Activated CD4-positive, alpha-beta T cell treated with anti-CD3 and anti-CD28 coated beads for 36 hours (primary cell): ENCODE measurements at regions of chr20 and their contacts with region 1.

Region 1: GRCh38 chr20:46363800-46364634 is 42.4 kb downstream of the ELMO2 start:
- DNase-seq: peak; percentile 92
- ATAC-seq: peak; percentile 85
- H3K4me3 Mint-ChIP-seq: peak overlapping the region; percentile 84
- H3K27ac Mint-ChIP-seq: peak overlapping the region; percentile 86
- H3K4me1 Mint-ChIP-seq: peaks cover 82% of the 10 kb centered on the region
- H3K27me3 Mint-ChIP-seq: no peaks in the 10 kb centered on the region

Region 2: GRCh38 chr20:44909872-44910689 is 1453.9 kb before region 1 on chr20 and contains the start of gene PABPC1L:
- CTCF ChIA-PET with region 1: no interaction called
- POLR2A ChIA-PET with region 1: no interaction called
- intact Hi-C with region 1: loop called in 1 of 2 experiments (anchors 5 kb)
- DNase-seq: peak; percentile 86
- ATAC-seq: peak; percentile 90
- H3K4me3 Mint-ChIP-seq: peak within 1 kb of the TSS; percentile 78
- H3K27ac Mint-ChIP-seq: peak within 1 kb of the TSS; percentile 64
- H3K4me1 Mint-ChIP-seq: peaks cover 34% of the 10 kb centered on the region
- H3K27me3 Mint-ChIP-seq: no peaks in the 10 kb centered on the region
- total RNA-seq, gene PABPC1L: 61.7 to 71.3 TPM

Region 3: DNA sequence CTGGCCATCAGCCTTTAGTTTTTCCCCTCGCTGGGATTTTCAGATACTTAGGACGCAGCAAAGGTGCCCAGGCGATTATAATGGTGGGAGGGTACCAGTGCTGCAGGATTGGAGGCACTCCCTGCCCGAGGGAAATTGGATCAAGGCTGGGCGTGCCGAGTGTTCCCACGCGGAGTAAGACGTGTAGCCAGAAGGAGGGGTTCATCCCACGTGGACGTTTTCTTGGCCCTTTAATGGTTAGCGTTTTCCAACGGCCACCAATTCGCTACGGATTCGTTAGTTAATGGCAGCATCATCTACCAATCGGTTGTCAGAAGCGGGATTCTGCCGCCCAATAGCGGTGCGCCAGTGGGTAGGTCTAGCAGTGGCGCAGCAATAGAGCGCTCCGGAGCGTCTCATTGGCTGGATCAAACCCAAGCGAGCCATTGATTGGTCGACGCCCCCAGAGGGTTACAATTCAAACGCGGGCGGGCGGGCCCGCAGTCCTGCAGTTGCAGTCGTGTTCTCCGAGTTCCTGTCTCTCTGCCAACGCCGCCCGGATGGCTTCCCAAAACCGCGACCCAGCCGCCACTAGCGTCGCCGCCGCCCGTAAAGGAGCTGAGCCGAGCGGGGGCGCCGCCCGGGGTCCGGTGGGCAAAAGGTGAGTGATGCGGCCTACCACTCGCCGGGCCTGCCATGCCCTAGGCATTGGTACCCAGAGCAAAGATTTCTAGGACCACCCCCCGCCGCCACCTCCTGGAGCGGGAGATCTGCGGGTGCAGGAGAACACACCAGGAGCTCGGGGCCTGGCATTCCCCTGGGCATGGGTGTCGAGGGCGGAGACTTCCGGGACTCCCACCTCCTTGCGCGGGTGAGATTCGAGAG is 551.6 kb before region 1 on chr20 and contains the start of gene UBE2C:
- CTCF ChIA-PET with region 1: no interaction called
- POLR2A ChIA-PET with region 1: no interaction called
- intact Hi-C with region 1: loop called in 1 of 2 experiments (anchors 1 kb)
- DNase-seq: peak; percentile 97
- ATAC-seq: peak; percentile 100
- H3K4me3 Mint-ChIP-seq: peak within 1 kb of the TSS; percentile 99
- H3K27ac Mint-ChIP-seq: peak within 1 kb of the TSS; percentile 88
- H3K4me1 Mint-ChIP-seq: peaks cover 21% of the 10 kb centered on the region
- H3K27me3 Mint-ChIP-seq: no peaks in the 10 kb centered on the region
- total RNA-seq, gene UBE2C: 175 to 230 TPM

Region 4: GRCh38 chr20:45910670-45911485 is 453.1 kb before region 1 on chr20:
- CTCF ChIA-PET with region 1: no interaction called
- POLR2A ChIA-PET with region 1: no interaction called
- intact Hi-C with region 1: loop called in 1 of 2 experiments (anchors 1 kb)
- DNase-seq: peak; percentile 98
- ATAC-seq: peak; percentile 92
- H3K4me3 Mint-ChIP-seq: peak overlapping the region; percentile 68
- H3K27ac Mint-ChIP-seq: peak overlapping the region; percentile 80
- H3K4me1 Mint-ChIP-seq: peaks cover 16% of the 10 kb centered on the region
- H3K27me3 Mint-ChIP-seq: peaks cover 12% of the 10 kb centered on the region

Region 5: GRCh38 chr20:46022411-46023147 is 341.4 kb before region 1 on chr20:
- CTCF ChIA-PET with region 1: interaction called, 5 read pairs
- POLR2A ChIA-PET with region 1: no interaction called
- intact Hi-C with region 1: loop called in 1 of 2 experiments (anchors 2 kb)
- DNase-seq: peak; percentile 88
- ATAC-seq: peak; percentile 60
- H3K4me3 Mint-ChIP-seq: peak overlapping the region; percentile 57
- H3K27ac Mint-ChIP-seq: no peak overlapping the region
- H3K4me1 Mint-ChIP-seq: peaks cover 17% of the 10 kb centered on the region
- H3K27me3 Mint-ChIP-seq: peaks cover 29% of the 10 kb centered on the region

Region 6: GRCh38 chr20:46400828-46401477 is 36.9 kb after region 1 on chr20:
- CTCF ChIA-PET with region 1: interaction called, 6 read pairs
- POLR2A ChIA-PET with region 1: interaction called, 8 read pairs
- intact Hi-C with region 1: loop called (anchors 1 kb)
- DNase-seq: peak; percentile 41
- ATAC-seq: peak; percentile 87
- H3K4me3 Mint-ChIP-seq: peak overlapping the region; percentile 37
- H3K27ac Mint-ChIP-seq: peak overlapping the region; percentile 80
- H3K4me1 Mint-ChIP-seq: peaks cover 64% of the 10 kb centered on the region
- H3K27me3 Mint-ChIP-seq: no peaks in the 10 kb centered on the region

Region 7: GRCh38 chr20:46562373-46563169 is 198.6 kb after region 1 on chr20:
- CTCF ChIA-PET with region 1: no interaction called
- POLR2A ChIA-PET with region 1: no interaction called
- intact Hi-C with region 1: loop called in 1 of 2 experiments (anchors 5 kb)
- DNase-seq: peak; percentile 82
- ATAC-seq: peak; percentile 66
- H3K4me3 Mint-ChIP-seq: no peak overlapping the region
- H3K27ac Mint-ChIP-seq: no peak overlapping the region
- H3K4me1 Mint-ChIP-seq: peaks cover 18% of the 10 kb centered on the region
- H3K27me3 Mint-ChIP-seq: peaks cover 13% of the 10 kb centered on the region